ENCODE measurements at regions of chr7 and their contacts with region 1.

Region 1: DNA sequence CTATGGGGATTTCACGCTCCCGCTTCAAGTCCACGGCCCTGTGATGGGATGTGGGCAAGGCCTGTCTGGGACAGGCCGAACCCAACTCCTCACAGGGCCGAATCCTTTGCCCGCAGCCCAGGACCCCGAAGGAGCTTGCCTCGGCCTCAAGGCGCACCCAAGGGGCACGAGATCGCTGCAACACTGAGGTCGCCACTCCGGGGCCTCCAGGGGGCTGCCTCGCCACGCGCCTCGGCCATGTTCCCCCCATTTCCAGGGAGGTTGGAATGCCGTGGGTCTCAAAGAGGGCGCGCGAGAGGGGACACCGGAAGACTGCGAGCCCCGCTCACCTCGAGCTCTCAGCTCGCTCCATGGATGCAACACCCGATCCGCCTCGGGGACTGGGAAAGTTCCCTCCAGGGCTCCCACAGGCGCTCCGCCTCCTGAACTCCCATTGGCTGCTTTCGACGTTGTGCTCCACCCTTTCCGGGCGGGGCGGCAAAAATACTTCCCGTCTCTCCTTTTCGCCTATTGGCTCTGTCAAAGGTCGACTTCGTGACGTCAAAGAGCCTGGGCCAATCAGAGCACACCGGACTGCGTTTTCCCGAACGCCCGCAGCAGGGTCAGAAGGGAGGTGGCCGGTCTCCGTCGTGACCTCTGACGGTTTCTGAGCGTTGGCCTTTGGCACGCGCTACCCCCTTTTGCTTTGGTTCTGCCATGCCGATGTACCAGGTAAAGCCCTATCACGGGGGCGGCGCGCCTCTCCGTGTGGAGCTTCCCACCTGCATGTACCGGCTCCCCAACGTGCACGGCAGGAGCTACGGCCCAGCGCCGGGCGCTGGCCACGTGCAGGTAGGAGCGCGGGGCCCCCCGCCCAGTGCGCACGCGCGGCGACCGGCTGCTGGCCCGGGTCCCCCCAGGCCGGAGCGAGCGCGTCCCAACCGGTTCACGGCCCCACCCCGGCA is at the starts of genes AIMP2 and PMS2:
- DNase-seq: peak; percentile 94
- CTCF ChIP-seq: peak; percentile 39

Region 2: DNA sequence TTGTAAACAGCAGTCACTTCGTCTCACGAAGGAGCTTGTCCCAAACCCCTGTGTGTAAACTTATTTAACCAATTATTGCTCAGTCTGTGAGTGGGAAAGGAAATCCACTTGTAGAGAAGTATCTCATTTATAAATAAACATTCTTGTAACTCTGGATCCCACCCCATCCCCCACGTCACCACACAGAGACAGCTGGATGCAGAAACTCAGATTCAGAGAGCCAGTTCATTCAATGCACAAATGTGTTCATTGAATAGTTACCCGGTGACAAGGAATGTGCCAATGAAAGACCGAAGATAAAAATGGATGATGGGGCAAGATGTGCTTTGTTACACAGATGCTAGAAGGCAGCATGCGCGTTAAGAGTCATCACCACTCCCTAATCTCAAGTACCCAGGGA is 136.6 kb before region 1 on chr7:
- in situ Hi-C with region 1: loop called (anchors 25 kb)
- DNase-seq: no peak
- CTCF ChIP-seq: no peak

Region 3: GRCh38 chr7:6323967-6324701 is 315.2 kb after region 1 on chr7:
- in situ Hi-C with region 1: loop called (anchors 10 kb)
- DNase-seq: no peak
- CTCF ChIP-seq: no peak

Measured in GM13977 (cell line).